IMR-90 (cell line): ENCODE measurements at regions of chr2 and their contacts with region 1.

Region 1: DNA sequence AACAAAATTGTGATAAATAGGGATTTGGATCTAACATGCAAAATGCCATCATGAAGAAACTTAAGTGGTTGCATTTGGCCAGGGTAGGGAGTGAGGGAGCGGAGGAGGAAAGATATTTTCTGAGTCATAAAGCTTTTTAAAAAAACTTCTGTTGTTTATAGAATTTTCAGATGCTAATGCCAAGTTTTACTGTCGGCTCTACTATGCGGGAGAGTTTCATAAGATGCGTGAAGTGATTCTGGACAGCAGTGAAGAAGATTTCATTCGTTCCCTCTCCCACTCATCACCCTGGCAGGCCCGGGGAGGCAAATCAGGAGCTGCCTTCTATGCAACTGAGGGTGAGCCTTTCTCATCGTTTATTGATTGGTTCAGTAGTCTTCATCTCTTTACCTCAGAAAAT is 56.0 kb upstream of the PTH2R start:
- DNase-seq: peak; percentile 89
- ATAC-seq: peak; percentile 91
- H3K4me3 ChIP-seq: no peak overlapping the region
- H3K27ac ChIP-seq: peak overlapping the region; percentile 1; the same call in 1 of the 2 replicates
- H3K4me1 ChIP-seq: no peaks in the 10 kb centered on the region
- H3K27me3 ChIP-seq: no peaks in the 10 kb centered on the region
- CTCF ChIP-seq: no peak
- POLR2A ChIP-seq: no peak
- RAD21 ChIP-seq: no peak

Region 2: GRCh38 chr2:208224802-208225201 is 125.8 kb before region 1 on chr2:
- CTCF ChIA-PET with region 1: no interaction called
- POLR2A ChIA-PET with region 1: no interaction called
- dilution Hi-C with region 1: no loop called
- in situ Hi-C with region 1: no loop called
- intact Hi-C with region 1: no loop called
- DNase-seq: no peak
- ATAC-seq: 0 out of 2 replicates have a peak, but pooled peaks have one; percentile 14
- H3K4me3 ChIP-seq: no peak overlapping the region
- H3K27ac ChIP-seq: no peak overlapping the region
- H3K4me1 ChIP-seq: no peaks in the 10 kb centered on the region
- H3K27me3 ChIP-seq: no peaks in the 10 kb centered on the region
- CTCF ChIP-seq: no peak
- POLR2A ChIP-seq: no peak
- RAD21 ChIP-seq: no peak

Region 3: GRCh38 chr2:208311954-208312353 is 38.7 kb before region 1 on chr2:
- CTCF ChIA-PET with region 1: no interaction called
- POLR2A ChIA-PET with region 1: no interaction called
- dilution Hi-C with region 1: no loop called
- in situ Hi-C with region 1: no loop called
- intact Hi-C with region 1: loop called (anchors 5 kb)
- DNase-seq: peak; percentile 25
- ATAC-seq: no peak
- H3K4me3 ChIP-seq: no peak overlapping the region
- H3K27ac ChIP-seq: no peak overlapping the region
- H3K4me1 ChIP-seq: no peaks in the 10 kb centered on the region
- H3K27me3 ChIP-seq: no peaks in the 10 kb centered on the region
- CTCF ChIP-seq: no peak
- POLR2A ChIP-seq: no peak
- RAD21 ChIP-seq: no peak